ENCODE measurements at regions of chr5 and their contacts with region 1.

Region 1: DNA sequence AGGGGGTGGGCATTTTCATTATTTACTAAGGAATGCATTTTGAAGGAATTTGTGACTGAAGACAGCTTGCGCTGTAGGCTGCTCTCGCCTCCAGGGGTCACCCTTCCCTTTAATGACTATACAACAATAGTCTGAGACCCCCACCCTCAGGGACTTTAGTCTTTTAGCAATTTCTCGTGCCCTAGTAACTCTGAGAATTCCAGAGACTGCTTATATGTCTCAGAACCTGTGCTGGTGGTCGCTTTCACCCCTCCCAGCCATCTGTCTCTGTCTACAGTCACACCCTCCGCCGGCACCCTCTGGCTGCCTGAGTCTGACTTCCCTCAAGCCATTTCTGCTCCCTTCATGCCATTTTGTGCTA is 671.4 kb downstream of the NR2F1-AS1 start:
- DNase-seq: peak; percentile 65
- ATAC-seq: peak; percentile 85
- H3K4me3 Mint-ChIP-seq: no peak overlapping the region
- H3K27ac Mint-ChIP-seq: no peak overlapping the region
- H3K4me1 Mint-ChIP-seq: peaks cover 41% of the 10 kb centered on the region
- H3K27me3 Mint-ChIP-seq: no peaks in the 10 kb centered on the region
- CTCF ChIP-seq: peak; percentile 60

Region 2: GRCh38 chr5:92850886-92851285 is 58.7 kb before region 1 on chr5:
- CTCF ChIA-PET with region 1: no interaction called
- POLR2A ChIA-PET with region 1: no interaction called
- DNase-seq: no peak
- ATAC-seq: no peak
- H3K4me3 Mint-ChIP-seq: no peak overlapping the region
- H3K27ac Mint-ChIP-seq: no peak overlapping the region
- H3K4me1 Mint-ChIP-seq: no peaks in the 10 kb centered on the region
- H3K27me3 Mint-ChIP-seq: no peaks in the 10 kb centered on the region
- CTCF ChIP-seq: no peak

Region 3: GRCh38 chr5:92885950-92886349 is 23.6 kb before region 1 on chr5:
- CTCF ChIA-PET with region 1: interaction called, 13 read pairs
- POLR2A ChIA-PET with region 1: no interaction called
- DNase-seq: peak; percentile 60
- ATAC-seq: peak; percentile 100
- H3K4me3 Mint-ChIP-seq: no peak overlapping the region
- H3K27ac Mint-ChIP-seq: no peak overlapping the region
- H3K4me1 Mint-ChIP-seq: peaks cover 4% of the 10 kb centered on the region
- H3K27me3 Mint-ChIP-seq: no peaks in the 10 kb centered on the region
- CTCF ChIP-seq: 0 out of 2 replicates have a peak, but pooled peaks have one; percentile 24

Region 4: DNA sequence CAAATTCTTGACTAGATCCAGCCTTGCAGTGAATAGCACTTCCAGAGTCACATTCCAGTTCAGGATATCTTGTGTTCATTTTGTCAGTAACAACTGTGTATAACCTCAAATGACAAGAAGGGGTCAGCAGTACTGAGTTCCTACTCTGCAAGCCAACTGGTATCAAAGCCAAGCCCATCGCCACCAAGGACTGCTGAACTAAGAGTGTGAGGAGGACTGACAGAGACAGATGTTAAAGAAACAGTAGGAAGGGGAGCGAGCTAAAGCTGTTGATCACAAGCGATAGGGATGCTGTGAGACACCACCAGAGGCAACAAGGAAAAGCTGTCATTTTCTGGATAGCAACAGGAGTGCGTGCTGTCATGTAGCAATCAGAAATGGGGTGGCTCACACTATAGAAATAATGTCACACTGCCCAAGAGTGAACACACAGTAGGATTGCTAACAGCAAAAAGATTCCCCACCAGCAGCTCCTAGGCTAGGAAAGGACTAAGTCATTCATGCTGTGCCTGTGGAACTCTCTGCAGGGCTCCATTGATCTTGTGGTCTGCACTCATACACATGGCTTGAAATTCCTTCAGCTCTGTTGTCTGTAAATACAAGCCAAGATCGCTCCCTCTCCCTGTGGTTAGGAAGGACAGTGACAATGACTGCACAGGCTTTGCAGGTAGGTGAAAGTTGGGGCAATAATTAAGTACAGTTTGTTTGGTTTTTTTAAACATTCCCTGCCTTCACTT is 12.8 kb after region 1 on chr5:
- CTCF ChIA-PET with region 1: interaction called, 15 read pairs
- POLR2A ChIA-PET with region 1: no interaction called
- DNase-seq: no peak
- ATAC-seq: peak; percentile 82
- H3K4me3 Mint-ChIP-seq: no peak overlapping the region
- H3K27ac Mint-ChIP-seq: no peak overlapping the region
- H3K4me1 Mint-ChIP-seq: peaks cover 34% of the 10 kb centered on the region
- H3K27me3 Mint-ChIP-seq: no peaks in the 10 kb centered on the region
- CTCF ChIP-seq: no peak

Region 5: DNA sequence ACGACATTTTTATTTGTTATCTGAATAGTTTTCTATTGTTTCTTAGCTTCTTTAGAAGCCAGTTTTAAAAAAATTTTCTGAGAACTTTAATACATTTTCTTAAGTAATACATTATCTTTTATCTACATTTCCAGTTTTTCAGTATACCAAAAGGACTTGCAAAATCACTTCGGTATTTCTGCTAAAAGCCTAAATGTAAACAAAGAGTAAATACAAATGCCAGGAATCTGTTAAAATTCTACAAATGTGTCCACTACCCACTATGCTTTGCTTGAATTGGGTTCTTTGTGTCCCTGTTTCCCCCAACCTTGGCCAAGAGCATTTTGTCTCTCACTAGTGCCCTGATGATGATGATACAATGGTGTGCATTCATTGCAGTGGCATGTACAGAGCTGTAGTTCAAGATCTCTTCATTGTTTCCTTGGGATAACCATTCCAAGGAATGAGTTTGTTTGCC is 60.2 kb after region 1 on chr5:
- CTCF ChIA-PET with region 1: no interaction called
- POLR2A ChIA-PET with region 1: no interaction called
- DNase-seq: no peak
- ATAC-seq: no peak
- H3K4me3 Mint-ChIP-seq: no peak overlapping the region
- H3K27ac Mint-ChIP-seq: no peak overlapping the region
- H3K4me1 Mint-ChIP-seq: no peaks in the 10 kb centered on the region
- H3K27me3 Mint-ChIP-seq: no peaks in the 10 kb centered on the region
- CTCF ChIP-seq: no peak

Measured in WTC11 (cell line).